Common myeloid progenitor, CD34-positive (primary cell): ENCODE measurements at regions of chr11 and their contacts with region 1.

Region 1: DNA sequence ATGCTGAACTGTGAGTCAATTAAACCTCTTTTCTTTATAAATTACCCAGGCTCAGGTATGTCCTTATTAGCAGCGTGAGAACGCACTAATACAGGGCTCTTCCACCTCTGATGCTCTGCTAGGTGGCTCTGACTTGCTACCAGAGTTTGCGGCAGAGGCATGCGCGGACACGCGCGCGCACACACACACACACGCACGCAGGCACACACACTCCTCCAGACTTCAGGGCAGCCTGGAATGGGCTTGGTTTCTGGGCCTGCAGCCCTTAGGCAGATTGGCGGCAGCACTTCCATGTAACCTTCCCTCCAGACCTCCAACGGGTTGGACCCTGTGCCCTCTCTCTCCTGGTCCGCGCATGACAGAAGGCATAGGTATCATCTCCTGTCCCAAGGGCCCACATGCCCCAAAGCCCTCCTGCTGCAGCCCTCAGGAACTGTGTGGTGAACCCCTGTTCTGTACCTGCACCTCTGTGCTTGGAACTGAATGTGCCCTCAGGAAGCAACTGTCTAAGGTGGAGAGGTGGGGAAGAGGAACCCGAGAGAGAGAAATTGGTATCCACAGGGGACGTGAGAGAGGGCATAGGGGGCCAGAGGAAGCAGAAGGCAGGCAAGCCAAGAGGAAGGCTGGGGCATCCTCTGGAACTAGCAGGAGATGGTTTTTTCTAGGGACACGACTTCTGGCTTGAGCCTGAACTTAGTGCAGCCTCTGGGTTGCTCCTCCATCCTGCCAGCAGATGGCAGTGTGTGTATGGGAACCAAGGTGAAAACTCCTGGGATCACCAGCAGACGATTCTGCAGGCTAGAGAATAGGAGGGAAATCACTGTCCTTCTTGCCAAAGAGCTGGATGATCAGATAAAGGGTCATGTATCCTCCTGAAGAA is 23.4 kb upstream of the RIC3 start:
- DNase-seq: peak; percentile 62 to 76 (median 63)
- H3K4me3 ChIP-seq: no peak overlapping the region
- H3K27ac ChIP-seq: no peak overlapping the region
- H3K4me1 ChIP-seq: peaks cover 0 to 10% (median 6%) of the 10 kb centered on the region in 4 experiments
- H3K27me3 ChIP-seq: no peaks in the 10 kb centered on the region

Region 2: DNA sequence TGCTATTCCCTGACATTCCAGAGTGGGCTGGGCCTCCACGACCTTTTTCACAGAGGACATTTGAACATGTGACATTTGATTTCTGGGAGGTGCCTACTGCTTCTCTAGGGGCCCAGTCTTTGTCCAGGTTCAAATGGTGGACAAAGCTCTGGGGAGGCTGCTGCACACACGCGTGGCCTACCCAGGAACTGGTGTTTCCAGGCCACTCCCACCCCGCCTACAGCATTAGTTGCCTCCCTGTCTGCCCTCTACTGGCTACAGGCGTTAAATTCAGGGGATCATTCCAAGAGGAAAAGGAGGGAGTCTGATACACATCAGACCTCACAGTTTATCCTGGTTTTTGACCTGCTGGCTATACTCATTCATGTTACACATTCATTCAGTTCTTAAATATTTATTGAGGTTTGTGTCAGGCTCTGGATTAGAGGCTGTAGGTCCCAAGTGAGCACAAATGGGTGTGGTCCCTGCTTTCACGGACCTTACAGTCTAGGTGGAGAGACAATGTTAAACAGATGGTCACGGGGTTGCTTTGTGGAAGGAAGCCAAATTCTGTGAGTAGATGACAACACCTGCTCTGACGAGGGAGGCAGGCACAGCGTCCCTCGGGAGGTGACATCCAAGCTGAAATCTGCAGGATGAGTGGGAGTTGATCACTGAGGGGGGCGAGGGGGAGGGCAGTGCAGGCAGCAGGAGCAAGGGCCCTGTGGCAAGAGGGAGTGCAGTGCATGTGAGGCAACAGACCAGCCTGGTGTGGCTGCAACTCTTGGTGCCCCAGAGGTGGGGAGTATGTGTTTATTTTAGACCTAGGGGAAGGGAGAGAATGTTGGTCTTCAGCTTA is 99.5 kb before region 1 on chr11:
- CTCF ChIA-PET with region 1: no interaction called
- POLR2A ChIA-PET with region 1: no interaction called
- DNase-seq: peak; percentile 53 to 67 (median 66)
- H3K4me3 ChIP-seq: no peak overlapping the region
- H3K27ac ChIP-seq: no peak overlapping the region
- H3K4me1 ChIP-seq: peaks cover 0 to 9% (median 3%) of the 10 kb centered on the region in 4 experiments
- H3K27me3 ChIP-seq: peaks cover 0 to 2% (median 0%) of the 10 kb centered on the region in 5 experiments

Region 3: DNA sequence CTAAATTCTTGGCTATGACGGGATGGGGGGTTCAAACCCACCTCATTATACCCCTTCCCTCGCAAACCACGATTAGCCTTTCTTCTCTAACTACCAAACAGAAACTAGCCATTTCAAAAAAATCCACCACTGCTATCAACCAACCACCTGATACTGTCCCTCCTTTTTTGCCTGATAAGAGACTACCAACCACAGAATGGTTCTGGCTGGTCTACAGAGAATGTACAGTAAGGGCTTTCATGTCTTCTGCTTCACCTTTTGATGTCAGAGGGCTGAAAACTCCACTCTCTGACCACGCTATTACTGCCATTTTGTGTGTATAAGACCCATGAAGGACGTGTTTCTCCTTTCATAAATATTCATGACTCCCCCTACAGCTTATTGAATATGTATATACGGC is 42.5 kb before region 1 on chr11:
- CTCF ChIA-PET with region 1: no interaction called
- POLR2A ChIA-PET with region 1: no interaction called
- DNase-seq: peak in 1 of 3 donors; percentile 8
- H3K4me3 ChIP-seq: no peak overlapping the region
- H3K27ac ChIP-seq: no peak overlapping the region
- H3K4me1 ChIP-seq: no peaks in the 10 kb centered on the region
- H3K27me3 ChIP-seq: no peaks in the 10 kb centered on the region

Region 4: DNA sequence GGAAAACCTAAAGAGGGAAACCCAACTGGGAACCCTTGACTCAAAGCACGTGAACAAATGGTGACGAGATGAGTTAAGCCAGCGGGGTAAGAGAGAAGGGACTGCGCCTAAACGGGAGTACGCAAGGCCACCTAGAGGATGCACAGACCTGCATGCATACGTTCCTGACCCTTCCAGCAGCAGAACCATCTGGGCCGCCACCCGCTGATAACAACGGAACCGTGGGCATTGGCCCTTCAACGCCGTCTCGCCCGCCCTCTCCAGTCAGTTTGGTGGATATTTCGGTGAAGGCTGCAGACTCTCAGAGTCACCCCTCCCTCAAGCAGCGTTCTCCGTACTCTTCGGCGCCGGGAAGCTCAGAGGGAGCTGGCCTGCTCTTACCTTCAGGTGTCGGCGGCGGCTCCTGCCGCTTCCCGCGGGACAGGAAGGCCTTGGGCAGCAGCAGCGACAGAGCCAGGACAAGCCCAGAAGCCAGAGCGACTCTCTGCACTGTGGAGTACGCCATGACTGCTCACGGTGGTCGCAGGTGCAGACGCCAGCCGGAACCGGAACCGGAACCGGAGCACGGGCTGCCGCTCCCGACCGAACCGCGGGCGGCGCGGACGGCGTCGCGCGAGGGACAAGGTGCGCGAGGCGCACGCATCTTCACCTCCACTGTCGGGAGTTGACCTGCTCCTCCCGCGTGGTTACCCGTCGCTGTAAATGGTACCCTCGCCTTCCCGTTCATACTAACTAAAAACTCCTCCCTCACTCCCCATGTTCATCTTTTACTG is 23.6 kb before region 1 on chr11 and contains the start of gene RIC3:
- CTCF ChIA-PET with region 1: no interaction called
- POLR2A ChIA-PET with region 1: no interaction called
- DNase-seq: peak; percentile 25 to 53 (median 48)
- H3K4me3 ChIP-seq: peak within 1 kb of the TSS; percentile 15 to 88 (median 71)
- H3K27ac ChIP-seq: no peak within 1 kb of the TSS
- H3K4me1 ChIP-seq: peaks cover 0 to 20% (median 9%) of the 10 kb centered on the region in 4 experiments
- H3K27me3 ChIP-seq: peaks cover 2 to 35% (median 22%) of the 10 kb centered on the region in 5 experiments

Region 5: DNA sequence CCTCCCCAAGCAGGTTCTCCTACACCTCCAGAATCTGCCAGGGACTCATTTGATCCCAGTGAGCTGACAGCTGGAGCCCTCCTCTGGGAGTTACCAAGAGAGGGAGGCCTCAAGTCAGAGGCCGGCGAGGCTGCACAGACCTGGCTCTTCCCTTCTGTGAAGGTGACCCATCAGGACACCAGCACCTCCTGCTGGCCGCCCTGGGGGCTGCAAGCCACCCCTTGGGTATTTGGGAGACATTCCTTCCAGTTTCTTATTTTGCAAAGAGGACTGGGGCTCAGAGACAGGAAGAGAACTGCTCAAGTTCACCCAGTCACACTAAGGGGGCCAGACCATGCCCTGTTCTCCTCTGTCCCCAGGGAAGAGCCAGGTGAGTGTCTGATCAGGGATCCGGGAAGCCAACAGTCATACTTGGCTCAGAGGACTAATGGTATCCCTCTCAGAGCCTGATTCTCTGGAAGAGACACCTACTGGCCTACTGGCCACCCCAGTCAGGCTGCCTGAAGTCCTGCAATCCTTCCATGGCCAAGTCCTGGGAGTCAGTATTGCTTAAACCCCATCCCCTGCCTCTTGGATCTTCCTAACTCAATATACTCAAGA is 17.1 kb after region 1 on chr11:
- CTCF ChIA-PET with region 1: interaction called, 156 read pairs
- POLR2A ChIA-PET with region 1: interaction called, 3 read pairs
- DNase-seq: peak in 2 of 3 donors; percentile 31 to 48
- H3K4me3 ChIP-seq: no peak overlapping the region
- H3K27ac ChIP-seq: no peak overlapping the region
- H3K4me1 ChIP-seq: peaks cover 12 to 51% (median 41%) of the 10 kb centered on the region in 4 experiments
- H3K27me3 ChIP-seq: no peaks in the 10 kb centered on the region

Region 6: GRCh38 chr11:8219257-8220021 is 27.2 kb after region 1 on chr11:
- CTCF ChIA-PET with region 1: interaction called, 30 read pairs
- POLR2A ChIA-PET with region 1: no interaction called
- DNase-seq: peak in 2 of 3 donors; percentile 50 to 60
- H3K4me3 ChIP-seq: no peak overlapping the region
- H3K27ac ChIP-seq: no peak overlapping the region
- H3K4me1 ChIP-seq: peaks cover 0 to 21% (median 14%) of the 10 kb centered on the region in 4 experiments
- H3K27me3 ChIP-seq: peaks cover 0 to 20% (median 2%) of the 10 kb centered on the region in 5 experiments

Region 7: DNA sequence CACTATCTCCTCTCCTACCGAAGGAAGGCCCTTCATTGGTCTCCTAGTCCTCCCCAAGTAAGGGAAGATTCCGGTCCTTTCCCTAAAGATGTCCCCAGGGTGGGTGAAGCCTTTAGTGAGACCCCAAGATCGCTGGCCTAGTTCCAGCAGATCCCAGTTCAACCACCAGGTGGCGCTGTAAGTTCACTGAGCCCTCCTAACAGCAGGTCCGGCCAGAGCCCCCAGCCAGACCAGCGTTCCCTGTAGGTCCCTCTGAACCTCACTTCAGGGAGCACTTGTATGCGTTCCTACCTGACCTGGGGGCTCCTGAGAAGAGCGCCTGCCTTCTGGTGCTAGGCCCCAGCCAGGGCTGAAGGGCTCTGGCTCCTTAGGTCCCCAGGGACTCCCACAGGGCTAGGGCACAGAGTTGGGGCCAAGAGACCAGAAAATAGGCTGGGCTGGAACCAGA is 33.4 kb after region 1 on chr11:
- CTCF ChIA-PET with region 1: interaction called, 30 read pairs
- POLR2A ChIA-PET with region 1: no interaction called
- DNase-seq: peak; percentile 71 to 82 (median 71)
- H3K4me3 ChIP-seq: no peak overlapping the region
- H3K27ac ChIP-seq: no peak overlapping the region
- H3K4me1 ChIP-seq: peaks cover 0 to 18% (median 15%) of the 10 kb centered on the region in 4 experiments
- H3K27me3 ChIP-seq: peaks cover 0 to 20% (median 2%) of the 10 kb centered on the region in 5 experiments

Region 8: DNA sequence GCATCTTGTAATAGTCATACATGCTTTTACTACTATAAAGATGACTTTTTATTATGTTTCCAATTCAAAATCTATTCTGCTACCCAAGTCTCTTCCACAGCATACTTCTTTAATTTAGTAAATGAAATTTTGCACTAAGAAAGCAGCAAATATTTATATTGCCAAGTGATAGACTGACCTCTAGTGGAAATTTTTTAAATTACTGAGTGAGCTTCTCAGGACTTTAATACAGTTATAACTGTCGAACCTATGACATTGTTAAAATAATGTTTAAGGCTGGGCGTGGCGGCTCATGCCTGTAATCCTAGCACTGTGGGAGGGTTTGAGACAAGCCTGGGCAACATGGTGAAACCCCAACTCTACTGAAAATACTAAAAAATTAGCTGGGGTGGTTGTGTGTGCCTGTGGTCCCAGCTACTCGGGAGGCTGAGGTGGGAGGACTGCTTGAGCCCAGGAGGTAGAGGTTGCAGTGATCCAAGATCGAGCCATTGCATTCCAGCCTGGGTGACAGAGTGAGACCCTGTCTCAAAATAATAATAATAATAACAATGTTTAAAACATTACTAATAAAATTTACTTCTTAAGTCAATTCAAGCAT is 374.5 kb after region 1 on chr11:
- CTCF ChIA-PET with region 1: interaction called, 35 read pairs
- POLR2A ChIA-PET with region 1: no interaction called
- DNase-seq: peak; percentile 44 to 72 (median 67)
- H3K4me3 ChIP-seq: no peak overlapping the region
- H3K27ac ChIP-seq: no peak overlapping the region
- H3K4me1 ChIP-seq: no peaks in the 10 kb centered on the region
- H3K27me3 ChIP-seq: no peaks in the 10 kb centered on the region